Naive thymus-derived CD4-positive, alpha-beta T cell (primary cell): ENCODE measurements at regions of chr1 and their contacts with region 1.

Region 1: GRCh38 chr1:24635195-24635843 is 7.8 kb upstream of the SRRM1 start:
- DNase-seq: peak in 7 of 9 donors; percentile 39 to 69 (median 62)
- ATAC-seq: peak; percentile 85
- H3K4me3 ChIP-seq: no peak overlapping the region
- H3K4me3 Mint-ChIP-seq: no peak overlapping the region
- H3K27ac ChIP-seq: no peak overlapping the region
- H3K27ac Mint-ChIP-seq: peak overlapping the region in 5 of 9 donors; percentile 0 to 77 (median 64)
- H3K4me1 ChIP-seq: no peaks in the 10 kb centered on the region
- H3K4me1 Mint-ChIP-seq: peaks cover 2 to 14% (median 8%) of the 10 kb centered on the region in 7 donors
- H3K27me3 ChIP-seq: no peaks in the 10 kb centered on the region
- H3K27me3 Mint-ChIP-seq: peaks cover 4 to 21% (median 8%) of the 10 kb centered on the region in 5 donors

Region 2: DNA sequence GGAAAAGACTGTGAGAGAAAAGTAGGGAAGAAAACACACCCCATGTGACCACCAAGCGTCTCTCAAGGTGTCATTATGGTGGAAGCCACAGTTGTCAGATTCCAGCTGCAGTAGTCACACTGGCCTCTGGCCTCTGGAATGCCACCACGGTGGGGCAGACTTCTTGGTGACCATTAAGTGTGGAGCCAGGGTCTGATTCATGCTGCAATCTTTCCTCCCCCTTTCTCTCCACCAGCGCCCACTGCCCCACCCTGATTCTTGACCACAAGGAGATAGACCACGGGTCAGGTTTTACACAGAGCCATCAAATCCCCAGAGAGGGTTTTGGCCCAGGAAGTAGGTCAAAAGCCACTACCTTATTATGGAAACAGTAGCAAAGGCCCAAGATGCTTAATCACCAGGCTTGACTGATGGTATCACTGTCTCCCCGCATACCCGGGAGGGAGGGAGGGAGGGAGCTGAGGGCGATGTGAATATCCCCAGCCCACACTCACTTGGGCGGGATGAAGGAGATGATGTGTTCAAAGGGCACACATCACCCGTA is 368.8 kb before region 1 on chr1:
- CTCF ChIA-PET with region 1: no interaction called
- POLR2A ChIA-PET with region 1: no interaction called
- intact Hi-C with region 1: no loop called
- DNase-seq: no peak
- ATAC-seq: no peak
- H3K4me3 ChIP-seq: no peak overlapping the region
- H3K4me3 Mint-ChIP-seq: no peak overlapping the region
- H3K27ac ChIP-seq: no peak overlapping the region
- H3K27ac Mint-ChIP-seq: no peak overlapping the region
- H3K4me1 ChIP-seq: no peaks in the 10 kb centered on the region
- H3K4me1 Mint-ChIP-seq: peaks cover 0 to 6% (median 0%) of the 10 kb centered on the region in 7 donors
- H3K27me3 ChIP-seq: no peaks in the 10 kb centered on the region
- H3K27me3 Mint-ChIP-seq: peaks cover 6 to 34% (median 10%) of the 10 kb centered on the region in 5 donors

Region 3: DNA sequence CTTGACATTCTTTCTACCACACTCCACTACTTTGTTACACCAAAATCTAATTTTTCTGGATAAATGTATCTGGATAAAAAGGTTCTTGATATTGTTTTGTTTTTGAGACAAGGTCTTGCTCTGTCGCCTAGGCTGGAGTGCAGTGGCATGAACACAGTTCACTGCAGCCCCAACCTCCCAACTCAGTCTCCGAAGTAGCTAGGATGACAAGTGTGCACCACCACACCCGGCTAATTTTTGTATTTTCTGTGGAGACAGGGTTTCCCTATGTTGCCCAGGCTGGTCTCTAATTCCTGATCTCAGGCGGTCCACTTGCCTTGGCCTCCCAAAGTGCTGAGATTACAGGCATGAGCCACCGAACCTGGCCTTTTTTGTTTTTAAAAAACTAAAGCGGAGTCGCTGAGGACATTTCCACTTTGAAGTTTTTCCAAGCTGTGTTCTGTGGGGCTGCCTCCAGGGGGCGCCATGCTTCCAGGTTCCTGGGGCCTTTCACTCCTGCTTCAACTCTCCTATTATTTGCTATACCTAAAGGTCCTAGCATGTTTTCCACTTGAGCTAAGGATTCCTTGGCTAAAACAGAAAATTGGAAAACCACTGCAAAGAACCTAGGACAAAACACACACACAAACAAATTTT is 93.5 kb before region 1 on chr1:
- CTCF ChIA-PET with region 1: no interaction called
- POLR2A ChIA-PET with region 1: no interaction called
- intact Hi-C with region 1: loop called in 1 of 2 experiments (anchors 1 kb)
- DNase-seq: peak in 3 of 9 donors; percentile 13 to 33 (median 14)
- ATAC-seq: no peak
- H3K4me3 ChIP-seq: no peak overlapping the region
- H3K4me3 Mint-ChIP-seq: no peak overlapping the region
- H3K27ac ChIP-seq: peak overlapping the region; percentile 38
- H3K27ac Mint-ChIP-seq: peak overlapping the region in 7 of 9 donors; percentile 45 to 93 (median 76)
- H3K4me1 ChIP-seq: peaks cover 10 to 29% of the 10 kb centered on the region in 2 donors
- H3K4me1 Mint-ChIP-seq: peaks cover 10 to 74% (median 62%) of the 10 kb centered on the region in 7 donors
- H3K27me3 ChIP-seq: no peaks in the 10 kb centered on the region
- H3K27me3 Mint-ChIP-seq: no peaks in the 10 kb centered on the region